ENCODE measurements at regions of chr1 and their contacts with region 1.

Region 1: GRCh38 chr1:58805716-58806571 is 22.1 kb upstream of the JUN start:
- DNase-seq: no peak
- ATAC-seq: no peak
- H3K4me3 ChIP-seq: no peak overlapping the region
- H3K27ac ChIP-seq: no peak overlapping the region
- H3K4me1 ChIP-seq: peaks cover 0 to 19% (median 0%) of the 10 kb centered on the region in 12 donors
- H3K27me3 ChIP-seq: no peaks in the 10 kb centered on the region
- CTCF ChIP-seq: no peak
- POLR2A ChIP-seq: no peak

Region 2: DNA sequence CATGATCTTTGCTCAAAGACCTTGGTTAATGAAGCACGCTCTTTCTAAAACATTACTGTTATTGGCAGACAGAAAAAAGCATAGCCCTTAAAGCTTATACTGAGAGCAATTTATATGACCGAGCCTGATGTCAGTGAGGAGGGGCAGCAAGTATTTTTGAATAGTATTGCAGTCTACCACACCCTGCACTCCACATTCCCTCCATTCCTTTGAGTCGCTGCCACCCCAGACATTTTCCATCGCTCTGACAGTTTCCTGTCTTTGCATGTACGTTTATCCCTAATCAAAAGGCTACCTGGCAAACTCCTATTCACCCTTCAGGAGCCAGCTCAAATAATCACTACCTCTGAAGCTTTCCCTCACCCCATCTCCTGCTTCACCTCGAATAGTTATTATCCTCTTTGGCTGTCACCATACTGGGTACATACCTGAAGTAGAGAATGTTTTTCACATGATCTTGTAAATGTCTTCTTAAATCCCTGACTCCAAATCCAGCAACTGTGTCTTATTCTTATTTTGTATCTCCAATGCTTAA is 16.6 kb before region 1 on chr1:
- intact Hi-C with region 1: loop called in 1 of 10 experiments (anchors 2 kb)
- DNase-seq: no peak
- ATAC-seq: no peak
- H3K4me3 ChIP-seq: no peak overlapping the region
- H3K27ac ChIP-seq: no peak overlapping the region
- H3K4me1 ChIP-seq: peaks cover 0 to 16% (median 7%) of the 10 kb centered on the region in 12 donors
- H3K27me3 ChIP-seq: no peaks in the 10 kb centered on the region
- CTCF ChIP-seq: no peak
- POLR2A ChIP-seq: no peak

Measured in heart left ventricle (tissue), 16 donors.